ENCODE measurements at regions of chr12 and their contacts with region 1.

Region 1: GRCh38 chr12:101830367-101831325 is at the start of gene GNPTAB:
- DNase-seq: peak; percentile 95
- CTCF ChIP-seq: peak; percentile 81

Region 2: DNA sequence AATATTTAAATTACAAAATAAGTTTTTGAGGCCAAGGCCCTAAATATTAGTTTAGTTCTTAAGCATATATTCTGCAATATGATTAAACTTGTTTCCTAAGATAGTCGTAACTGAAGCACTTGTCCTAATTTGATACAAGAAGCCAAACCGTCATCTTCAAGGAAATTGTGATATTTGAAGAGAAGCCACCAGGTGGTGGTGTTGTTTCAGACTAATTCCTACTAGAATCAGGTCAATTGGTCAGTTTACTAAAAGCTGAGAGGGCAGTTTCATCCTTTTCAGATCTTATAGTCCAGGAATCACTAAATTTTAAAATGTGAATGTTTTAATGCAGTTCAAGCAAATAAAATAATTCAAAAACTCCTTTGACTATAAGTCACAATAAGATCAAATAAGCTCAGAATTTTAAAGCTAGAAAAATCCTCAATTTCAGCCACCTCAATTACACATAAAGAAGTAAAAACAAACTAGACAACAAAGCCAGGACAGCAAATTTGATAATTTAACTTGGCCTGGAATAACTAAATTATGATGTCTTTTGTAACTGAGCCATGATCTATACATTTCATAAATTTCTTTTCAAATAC is 416.0 kb before region 1 on chr12:
- in situ Hi-C with region 1: loop called (anchors 10 kb)
- DNase-seq: peak; percentile 53
- CTCF ChIP-seq: peak; percentile 60

Region 3: GRCh38 chr12:101782273-101782731 is 48.3 kb before region 1 on chr12:
- in situ Hi-C with region 1: loop called (anchors 5 kb)
- DNase-seq: no peak
- CTCF ChIP-seq: no peak